G401 (cell line): ENCODE measurements at regions of chr3 and their contacts with region 1.

Region 1: DNA sequence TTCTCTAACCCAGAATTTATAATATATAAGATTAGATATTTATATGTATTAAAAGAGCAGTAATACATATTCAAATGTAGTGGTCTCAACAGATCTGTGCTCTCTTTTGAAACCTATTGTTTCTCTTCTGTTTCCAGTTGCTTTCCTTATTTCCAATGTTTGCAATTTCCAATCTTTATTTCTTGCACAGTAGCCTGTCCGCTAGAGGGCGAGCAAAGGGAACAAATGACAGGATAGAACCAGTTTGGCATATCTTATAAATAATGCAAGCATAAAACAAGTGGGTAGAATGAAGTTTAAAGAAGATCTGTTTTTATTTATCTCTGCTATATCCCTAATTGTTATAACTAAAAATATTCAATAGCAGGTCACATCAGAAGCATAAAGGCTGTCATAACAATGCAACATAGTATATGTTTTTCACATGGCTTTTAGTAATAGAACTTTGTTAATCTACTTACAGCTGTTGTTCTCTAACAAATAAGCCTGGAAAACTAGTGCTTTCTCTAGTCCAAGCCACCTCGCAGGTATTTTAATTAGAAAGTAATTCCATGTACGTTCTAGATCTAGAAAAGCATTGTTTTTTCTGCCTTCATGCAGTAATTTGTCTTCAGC is 15.1 kb upstream of the TCAIM start:
- DNase-seq: peak; percentile 81

Region 2: GRCh38 chr3:44363591-44363990 is 40.1 kb after region 1 on chr3:
- in situ Hi-C with region 1: no loop called
- DNase-seq: no peak

Region 3: DNA sequence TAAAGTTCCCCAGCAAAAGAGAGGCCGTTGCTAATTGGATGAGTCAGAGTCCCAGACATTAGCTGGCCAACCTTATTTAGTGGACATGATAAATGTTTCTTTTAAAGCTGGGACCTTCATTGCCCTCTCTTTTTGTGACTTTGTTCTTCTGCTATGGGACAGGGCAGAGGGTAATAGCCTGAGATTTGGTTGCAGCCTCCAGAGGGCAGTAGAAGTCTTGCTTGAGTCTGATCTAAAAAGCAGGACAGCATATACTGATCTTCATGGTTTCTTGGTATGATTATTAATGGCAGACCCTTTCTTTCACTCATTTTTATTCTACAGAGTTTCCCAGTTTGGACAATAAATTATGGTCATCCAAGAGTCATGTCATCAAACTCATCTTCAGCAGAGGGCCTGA is 206.5 kb after region 1 on chr3:
- in situ Hi-C with region 1: loop called (anchors 25 kb)
- DNase-seq: peak; percentile 4